A673 (cell line): ENCODE measurements at regions of chr1 and their contacts with region 1.

Region 1: DNA sequence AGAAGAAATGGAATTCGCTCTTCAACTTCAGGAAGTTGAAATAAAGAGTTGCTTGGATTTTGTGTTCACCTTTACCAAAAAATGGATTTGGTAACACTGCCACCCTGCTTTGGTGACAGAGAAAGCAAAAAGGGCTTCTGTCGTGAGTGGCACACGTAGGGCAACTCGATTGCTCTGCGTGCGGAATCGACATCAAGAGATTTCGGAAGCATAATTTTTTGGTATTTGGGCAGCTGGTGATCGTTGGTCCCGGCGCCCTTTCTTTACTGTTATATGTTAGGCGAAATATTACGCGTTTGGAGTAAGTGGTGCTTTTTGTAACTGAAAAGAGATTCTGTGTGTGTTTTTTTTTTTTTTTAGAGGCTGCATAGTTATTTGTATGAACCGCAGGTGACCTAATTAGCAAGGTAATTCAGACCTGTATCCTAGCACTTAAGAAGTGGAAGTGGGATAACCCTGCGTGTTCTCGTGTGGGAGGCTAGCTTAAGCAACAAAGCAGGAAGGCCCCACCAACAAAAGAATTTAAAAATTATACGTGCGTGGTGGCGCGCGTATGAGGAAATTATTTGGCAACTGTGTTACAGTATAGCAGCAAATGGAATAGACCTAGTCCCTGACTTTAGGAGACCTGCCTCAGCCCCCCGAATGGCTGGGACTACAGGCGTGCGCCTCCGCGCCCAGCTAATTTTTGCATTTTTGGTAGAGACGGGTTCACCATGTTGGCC is at the start of gene RNU11:
- DNase-seq: peak; percentile 98
- H3K4me3 ChIP-seq: peak within 1 kb of the TSS; percentile 40
- H3K27ac ChIP-seq: peak within 1 kb of the TSS; percentile 100
- H3K4me1 ChIP-seq: peaks cover 9% of the 10 kb centered on the region
- H3K27me3 ChIP-seq: no peaks in the 10 kb centered on the region
- CTCF ChIP-seq: no peak; the same call in 1 of the 2 replicates
- total RNA-seq, gene RNU11: not detected in 2 replicates

Region 2: GRCh38 chr1:28703629-28704028 is 55.0 kb after region 1 on chr1:
- CTCF ChIA-PET with region 1: no interaction called
- POLR2A ChIA-PET with region 1: interaction called, 12 read pairs
- intact Hi-C with region 1: no loop called
- DNase-seq: no peak
- H3K4me3 ChIP-seq: no peak overlapping the region
- H3K27ac ChIP-seq: no peak overlapping the region
- H3K4me1 ChIP-seq: no peaks in the 10 kb centered on the region
- H3K27me3 ChIP-seq: no peaks in the 10 kb centered on the region
- CTCF ChIP-seq: no peak

Region 3: DNA sequence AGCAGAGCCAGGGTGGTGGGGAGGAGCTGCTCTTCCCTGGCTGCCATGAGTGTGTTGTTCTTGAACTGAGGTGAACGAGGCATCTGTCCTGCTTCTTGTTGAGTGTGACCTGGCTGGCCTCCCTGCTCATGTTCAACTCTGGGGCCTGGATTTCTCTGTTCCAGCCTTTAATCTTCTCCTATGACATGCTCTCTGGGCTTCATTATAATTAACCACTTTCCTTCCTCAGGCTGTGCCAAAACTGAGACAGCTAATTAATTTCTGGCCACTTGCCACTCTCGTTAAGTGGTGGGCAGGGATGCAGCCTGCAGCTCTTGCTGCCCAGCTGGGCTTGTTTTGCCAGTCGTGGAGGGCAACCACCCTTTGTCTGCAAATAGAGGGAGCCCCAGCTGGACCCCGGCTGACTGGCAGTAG is 186.6 kb after region 1 on chr1:
- CTCF ChIA-PET with region 1: no interaction called
- POLR2A ChIA-PET with region 1: no interaction called
- intact Hi-C with region 1: no loop called
- DNase-seq: peak; percentile 35
- H3K4me3 ChIP-seq: no peak overlapping the region
- H3K27ac ChIP-seq: no peak overlapping the region
- H3K4me1 ChIP-seq: no peaks in the 10 kb centered on the region
- H3K27me3 ChIP-seq: no peaks in the 10 kb centered on the region
- CTCF ChIP-seq: no peak